ENCODE measurements at regions of chr1 and their contacts with region 1.

Region 1: GRCh38 chr1:77978969-77979876 is at the start of gene FUBP1:
- DNase-seq: peak; percentile 97
- H3K4me3 Mint-ChIP-seq: no peak within 1 kb of the TSS
- H3K27ac Mint-ChIP-seq: no peak within 1 kb of the TSS
- H3K4me1 Mint-ChIP-seq: peaks cover 43% of the 10 kb centered on the region
- H3K27me3 Mint-ChIP-seq: no peaks in the 10 kb centered on the region
- total RNA-seq, gene FUBP1: 182 to 185 TPM

Region 2: DNA sequence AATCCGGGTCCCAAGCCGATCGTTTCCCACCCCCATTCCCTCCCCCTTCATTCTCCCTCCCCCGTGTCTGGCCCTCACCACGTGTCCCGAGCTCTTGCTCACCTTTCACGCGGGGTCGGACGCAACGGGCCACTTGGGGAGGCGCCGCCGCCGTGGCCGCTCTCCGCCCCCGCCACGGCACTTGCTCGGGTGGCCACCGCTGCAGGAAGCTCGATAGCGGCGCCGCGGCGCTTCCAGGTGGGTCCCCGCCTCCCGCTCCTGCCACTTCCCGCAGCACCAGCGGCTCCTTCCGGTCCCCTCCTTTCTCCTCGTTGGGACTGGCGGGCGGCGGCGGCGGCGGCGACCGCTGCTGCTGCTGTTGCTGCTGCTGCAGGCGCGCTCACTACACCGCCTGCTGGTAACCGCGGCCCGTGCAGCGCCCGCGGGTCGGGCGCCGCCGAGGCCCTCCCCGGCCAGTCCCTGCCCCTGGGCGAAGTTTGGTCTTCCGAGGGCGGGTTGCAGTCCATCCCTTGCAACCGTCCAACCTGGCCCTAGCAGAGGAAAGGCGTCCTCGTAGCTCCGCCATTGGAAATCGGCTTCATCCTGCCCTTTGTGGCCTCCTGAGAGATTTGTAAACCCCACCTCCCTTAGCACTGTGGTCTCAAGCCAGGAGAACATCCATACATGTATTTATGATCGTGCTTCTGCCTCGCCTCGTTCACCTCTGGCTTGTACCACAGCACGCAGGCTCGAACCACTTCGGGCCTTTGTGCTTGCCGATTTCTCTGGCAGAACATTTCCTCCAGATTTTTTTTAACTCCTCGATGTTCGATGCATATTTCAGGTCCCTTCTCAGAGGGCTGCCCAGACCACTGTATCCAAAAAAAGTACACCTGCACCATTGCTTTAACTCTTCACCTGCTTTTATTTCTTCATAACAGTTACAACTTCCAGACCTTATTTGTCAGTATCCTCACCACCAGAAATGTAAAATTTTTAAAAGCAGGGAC is 295.8 kb before region 1 on chr1:
- CTCF ChIA-PET with region 1: interaction called, 4 read pairs
- POLR2A ChIA-PET with region 1: interaction called, 29 read pairs
- DNase-seq: peak; percentile 92
- H3K4me3 Mint-ChIP-seq: peak overlapping the region; percentile 79
- H3K27ac Mint-ChIP-seq: peak overlapping the region; percentile 85
- H3K4me1 Mint-ChIP-seq: peaks cover 29% of the 10 kb centered on the region
- H3K27me3 Mint-ChIP-seq: no peaks in the 10 kb centered on the region

Region 3: GRCh38 chr1:77779529-77780281 is 199.5 kb before region 1 on chr1 and contains the start of gene MIGA1:
- CTCF ChIA-PET with region 1: interaction called, 3 read pairs
- POLR2A ChIA-PET with region 1: interaction called, 10 read pairs
- DNase-seq: peak; percentile 88
- H3K4me3 Mint-ChIP-seq: peak within 1 kb of the TSS; percentile 89
- H3K27ac Mint-ChIP-seq: peak within 1 kb of the TSS; percentile 73
- H3K4me1 Mint-ChIP-seq: peaks cover 36% of the 10 kb centered on the region
- H3K27me3 Mint-ChIP-seq: no peaks in the 10 kb centered on the region
- total RNA-seq, gene MIGA1: 11.5 to 12.8 TPM

Region 4: DNA sequence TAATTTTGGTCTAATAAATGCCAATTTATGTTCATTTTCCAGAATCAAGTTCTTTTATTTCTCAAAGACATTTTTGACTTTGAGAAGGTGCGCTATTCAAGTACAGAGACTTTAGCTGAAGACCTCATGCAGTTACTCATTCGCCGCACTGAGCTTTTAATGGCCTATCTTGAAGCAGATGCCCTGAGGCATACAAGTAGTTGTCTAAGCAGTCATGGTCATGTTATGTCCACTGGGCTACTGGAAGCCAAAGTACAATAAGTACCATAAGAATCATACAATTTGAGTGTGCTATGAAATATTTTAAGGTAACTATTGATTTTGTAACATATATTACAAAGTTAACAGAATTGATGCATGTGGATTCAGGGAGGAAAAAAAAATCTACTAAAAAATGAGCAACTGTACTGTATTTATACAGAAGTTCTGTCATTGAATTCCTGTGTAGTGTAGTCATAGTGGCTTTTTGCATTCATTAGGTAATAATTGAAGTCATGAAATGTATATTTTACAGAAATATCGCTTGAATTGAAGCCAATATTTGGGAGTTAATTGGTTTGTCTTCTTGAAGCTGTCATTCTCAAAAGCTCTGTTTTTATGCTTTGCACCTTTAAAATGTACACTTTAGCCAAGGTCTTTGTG is 104.3 kb before region 1 on chr1:
- CTCF ChIA-PET with region 1: no interaction called
- POLR2A ChIA-PET with region 1: no interaction called
- DNase-seq: no peak
- H3K4me3 Mint-ChIP-seq: no peak overlapping the region
- H3K27ac Mint-ChIP-seq: no peak overlapping the region
- H3K4me1 Mint-ChIP-seq: no peaks in the 10 kb centered on the region
- H3K27me3 Mint-ChIP-seq: no peaks in the 10 kb centered on the region

Region 5: GRCh38 chr1:77954521-77954920 is 24.7 kb before region 1 on chr1:
- CTCF ChIA-PET with region 1: interaction called, 3 read pairs
- POLR2A ChIA-PET with region 1: interaction called, 26 read pairs
- DNase-seq: no peak
- H3K4me3 Mint-ChIP-seq: no peak overlapping the region
- H3K27ac Mint-ChIP-seq: no peak overlapping the region
- H3K4me1 Mint-ChIP-seq: peaks cover 23% of the 10 kb centered on the region
- H3K27me3 Mint-ChIP-seq: no peaks in the 10 kb centered on the region

Region 6: DNA sequence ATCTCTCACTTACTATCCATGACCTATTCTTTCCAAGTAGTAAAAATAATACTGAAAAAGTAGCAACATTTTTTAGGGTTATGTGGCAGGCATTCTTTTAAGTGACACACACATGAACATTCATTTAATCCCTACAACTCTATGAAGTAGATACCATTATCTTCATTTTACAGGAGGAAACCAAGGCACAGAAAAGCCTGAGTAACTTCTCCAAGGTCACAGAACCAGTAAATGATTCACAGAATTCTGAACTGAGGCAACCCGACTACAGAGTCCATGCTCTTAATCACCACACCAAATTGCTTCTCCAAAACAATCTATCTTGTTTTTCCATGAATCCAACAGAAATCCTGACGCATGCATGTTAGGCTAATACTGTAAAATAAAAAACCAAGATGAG is 17.8 kb before region 1 on chr1:
- CTCF ChIA-PET with region 1: interaction called, 15 read pairs
- POLR2A ChIA-PET with region 1: interaction called, 27 read pairs
- DNase-seq: no peak
- H3K4me3 Mint-ChIP-seq: no peak overlapping the region
- H3K27ac Mint-ChIP-seq: no peak overlapping the region
- H3K4me1 Mint-ChIP-seq: peaks cover 16% of the 10 kb centered on the region
- H3K27me3 Mint-ChIP-seq: no peaks in the 10 kb centered on the region

Region 7: DNA sequence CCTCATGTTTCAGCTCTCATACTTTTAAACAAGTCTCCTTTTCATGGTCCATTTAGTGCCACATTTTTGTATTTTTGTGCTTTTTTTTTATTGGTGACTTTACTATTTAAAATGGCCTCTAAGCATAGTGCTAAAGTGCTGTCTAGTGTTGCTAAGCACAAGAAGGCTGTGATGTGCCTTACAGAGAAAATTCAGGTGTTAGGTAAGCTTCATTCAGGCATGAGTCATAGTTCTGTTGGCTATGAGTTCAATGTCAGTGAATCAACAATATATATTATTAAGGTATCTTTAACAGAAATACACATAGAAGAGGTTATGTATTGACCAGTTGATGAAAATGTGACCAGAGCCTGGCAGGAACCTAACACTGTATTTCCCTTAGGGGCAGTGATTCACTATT is 12.4 kb after region 1 on chr1:
- CTCF ChIA-PET with region 1: interaction called, 5 read pairs
- POLR2A ChIA-PET with region 1: interaction called, 671 read pairs
- DNase-seq: no peak
- H3K4me3 Mint-ChIP-seq: no peak overlapping the region
- H3K27ac Mint-ChIP-seq: no peak overlapping the region
- H3K4me1 Mint-ChIP-seq: peaks cover 19% of the 10 kb centered on the region
- H3K27me3 Mint-ChIP-seq: no peaks in the 10 kb centered on the region

Measured in activated CD4-positive, alpha-beta memory T cell treated with anti-CD3 and anti-CD28 coated beads, Interleukin-2, amount 10 ng/mL, durations not matched to agents 7 days and 5 days (primary cell).